SK-N-SH (cell line): ENCODE measurements at regions of chr11 and their contacts with region 1.

Region 1: GRCh38 chr11:38791302-38791961 is 2193.4 kb upstream of the RAG2 start:
- DNase-seq: peak; percentile 57
- H3K4me3 ChIP-seq: no peak overlapping the region
- H3K27ac ChIP-seq: no peak overlapping the region
- H3K4me1 ChIP-seq: no peaks in the 10 kb centered on the region; a peak in 1 of 4 replicates
- H3K27me3 ChIP-seq: no peaks in the 10 kb centered on the region
- CTCF ChIP-seq: peak; percentile 93
- EP300 ChIP-seq: no peak
- RAD21 ChIP-seq: peak; percentile 91

Region 2: GRCh38 chr11:37946155-37946766 is 845.2 kb before region 1 on chr11:
- CTCF ChIA-PET with region 1: interaction called, 33 read pairs
- POLR2A ChIA-PET with region 1: no interaction called
- DNase-seq: peak; percentile 16
- H3K4me3 ChIP-seq: no peak overlapping the region
- H3K27ac ChIP-seq: no peak overlapping the region
- H3K4me1 ChIP-seq: no peaks in the 10 kb centered on the region
- H3K27me3 ChIP-seq: no peaks in the 10 kb centered on the region
- CTCF ChIP-seq: peak; percentile 75
- EP300 ChIP-seq: no peak
- RAD21 ChIP-seq: peak; percentile 78

Region 3: DNA sequence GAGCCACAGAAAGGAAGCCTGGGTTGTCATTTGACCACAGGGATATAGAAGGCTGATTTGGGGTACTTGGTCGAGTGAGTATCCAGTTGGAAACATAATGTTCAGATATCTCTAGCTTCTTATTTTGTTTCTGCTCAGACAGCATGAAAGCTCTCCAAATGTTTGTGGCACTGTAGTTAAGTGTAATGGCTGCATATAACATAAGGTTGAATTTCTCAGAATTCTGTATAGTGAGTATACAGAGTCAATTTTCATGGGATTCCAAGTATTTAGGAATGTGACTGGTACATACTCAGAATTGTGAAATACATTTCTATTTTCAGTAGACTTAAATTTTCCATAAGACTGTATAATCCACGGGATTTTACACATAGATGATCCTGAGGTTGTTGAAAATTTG is 91.3 kb before region 1 on chr11:
- CTCF ChIA-PET with region 1: no interaction called
- POLR2A ChIA-PET with region 1: no interaction called
- DNase-seq: no peak
- H3K4me3 ChIP-seq: no peak overlapping the region
- H3K27ac ChIP-seq: no peak overlapping the region
- H3K4me1 ChIP-seq: no peaks in the 10 kb centered on the region
- H3K27me3 ChIP-seq: no peaks in the 10 kb centered on the region
- CTCF ChIP-seq: no peak
- EP300 ChIP-seq: no peak
- RAD21 ChIP-seq: no peak

Region 4: GRCh38 chr11:38756537-38756936 is 34.9 kb before region 1 on chr11:
- CTCF ChIA-PET with region 1: no interaction called
- POLR2A ChIA-PET with region 1: no interaction called
- DNase-seq: no peak
- H3K4me3 ChIP-seq: no peak overlapping the region
- H3K27ac ChIP-seq: no peak overlapping the region
- H3K4me1 ChIP-seq: no peaks in the 10 kb centered on the region
- H3K27me3 ChIP-seq: no peaks in the 10 kb centered on the region
- CTCF ChIP-seq: no peak
- EP300 ChIP-seq: no peak
- RAD21 ChIP-seq: no peak

Region 5: GRCh38 chr11:38809521-38809920 is 18.1 kb after region 1 on chr11:
- CTCF ChIA-PET with region 1: interaction called, 10 read pairs
- POLR2A ChIA-PET with region 1: interaction called, 3 read pairs
- DNase-seq: no peak
- H3K4me3 ChIP-seq: no peak overlapping the region
- H3K27ac ChIP-seq: no peak overlapping the region
- H3K4me1 ChIP-seq: no peaks in the 10 kb centered on the region
- H3K27me3 ChIP-seq: no peaks in the 10 kb centered on the region
- CTCF ChIP-seq: no peak
- EP300 ChIP-seq: no peak
- RAD21 ChIP-seq: no peak

Region 6: DNA sequence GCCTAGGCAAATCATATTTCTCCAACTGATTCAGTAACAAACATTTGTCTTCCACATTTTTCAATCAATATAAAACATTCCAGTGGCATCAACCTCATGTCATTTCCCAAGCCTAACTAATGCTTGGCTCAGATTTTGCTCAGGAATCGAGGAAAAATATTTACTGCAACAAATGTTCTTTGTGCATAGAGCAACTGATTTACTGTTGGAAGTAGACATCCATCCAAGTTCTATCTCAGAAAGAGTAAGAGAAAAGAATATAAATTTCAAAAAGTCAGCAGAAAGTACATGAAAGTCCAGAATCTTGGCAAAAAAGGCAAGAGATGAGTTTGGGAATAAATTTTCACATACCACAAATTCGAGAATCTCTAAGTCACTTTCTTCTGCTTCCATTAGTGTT is 51.6 kb after region 1 on chr11:
- CTCF ChIA-PET with region 1: no interaction called
- POLR2A ChIA-PET with region 1: no interaction called
- DNase-seq: no peak
- H3K4me3 ChIP-seq: no peak overlapping the region
- H3K27ac ChIP-seq: no peak overlapping the region
- H3K4me1 ChIP-seq: no peaks in the 10 kb centered on the region
- H3K27me3 ChIP-seq: no peaks in the 10 kb centered on the region
- CTCF ChIP-seq: no peak
- EP300 ChIP-seq: no peak
- RAD21 ChIP-seq: no peak